Upper lobe of right lung (tissue), 1 donor: ENCODE measurements at regions of chr12 and their contacts with region 1.

Region 1: DNA sequence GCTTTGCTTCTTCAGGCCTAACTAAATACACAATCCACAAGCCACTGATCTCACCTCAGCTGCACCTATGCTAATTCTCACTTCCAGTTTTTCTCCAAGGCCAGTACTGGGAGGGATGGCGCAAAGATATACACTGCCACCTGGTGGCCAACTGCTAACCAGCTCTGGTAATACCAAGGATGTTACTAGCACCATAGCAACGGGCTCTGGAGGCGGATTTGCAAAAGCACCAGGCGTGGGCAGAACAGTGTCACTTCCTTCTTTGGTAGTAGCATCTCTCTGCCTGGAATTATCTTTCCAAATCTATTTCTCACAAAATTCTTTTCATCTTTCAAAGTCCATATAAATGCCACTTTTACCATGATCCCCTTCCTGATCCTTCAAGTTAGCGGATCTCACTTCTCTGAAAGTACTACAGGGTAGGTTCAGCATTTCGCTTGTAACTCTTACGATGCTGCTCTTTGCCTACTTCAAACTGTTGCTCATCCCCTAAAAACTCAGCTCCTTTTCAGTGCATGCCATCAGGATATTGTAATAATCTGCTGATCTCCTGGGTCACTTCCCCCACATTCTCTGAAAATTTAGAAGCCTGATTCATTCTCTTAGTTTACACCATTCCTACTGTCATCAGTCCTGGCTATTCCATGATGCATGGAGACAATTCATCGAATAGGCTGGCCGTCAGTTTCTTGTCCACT is 37.1 kb upstream of the FOXJ2 start:
- DNase-seq: peak; percentile 88
- ATAC-seq: peak; percentile 98
- H3K4me3 ChIP-seq: no peak overlapping the region
- H3K27ac ChIP-seq: no peak overlapping the region
- H3K4me1 ChIP-seq: peaks cover 3% of the 10 kb centered on the region
- H3K27me3 ChIP-seq: no peaks in the 10 kb centered on the region
- CTCF ChIP-seq: peak; percentile 89

Region 2: DNA sequence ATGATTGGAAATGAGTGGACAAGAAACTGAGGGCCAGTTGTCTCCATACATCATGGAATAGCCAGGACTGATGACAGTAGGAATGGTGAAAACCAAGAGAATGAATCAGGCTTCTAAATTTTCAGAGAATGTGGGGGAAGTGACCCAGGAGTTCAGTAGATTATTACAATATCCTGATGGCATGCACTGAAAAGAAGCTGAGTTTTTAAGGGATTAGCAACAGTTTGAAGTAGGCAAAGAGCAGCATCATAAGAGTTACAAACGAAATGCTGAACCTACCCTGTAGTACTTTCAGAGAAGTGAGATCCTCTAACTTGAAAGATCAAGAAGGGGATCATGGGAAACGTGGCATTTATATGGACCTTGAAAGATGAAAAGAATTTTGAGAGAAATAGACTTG is 135.9 kb before region 1 on chr12:
- intact Hi-C with region 1: loop called (anchors 5 kb)
- DNase-seq: no peak
- ATAC-seq: no peak
- H3K4me3 ChIP-seq: no peak overlapping the region
- H3K27ac ChIP-seq: no peak overlapping the region
- H3K4me1 ChIP-seq: no peaks in the 10 kb centered on the region
- H3K27me3 ChIP-seq: no peaks in the 10 kb centered on the region
- CTCF ChIP-seq: no peak

Region 3: GRCh38 chr12:7933255-7933729 is 62.1 kb before region 1 on chr12:
- intact Hi-C with region 1: loop called (anchors 10 kb)
- DNase-seq: peak; percentile 67
- ATAC-seq: peak; percentile 91
- H3K4me3 ChIP-seq: peak overlapping the region; percentile 71
- H3K27ac ChIP-seq: peak overlapping the region; percentile 86
- H3K4me1 ChIP-seq: peaks cover 20% of the 10 kb centered on the region
- H3K27me3 ChIP-seq: no peaks in the 10 kb centered on the region
- CTCF ChIP-seq: peak; percentile 74